Stomach (tissue), 19 donors: ENCODE measurements at regions of chr17 and their contacts with region 1.

Region 1: DNA sequence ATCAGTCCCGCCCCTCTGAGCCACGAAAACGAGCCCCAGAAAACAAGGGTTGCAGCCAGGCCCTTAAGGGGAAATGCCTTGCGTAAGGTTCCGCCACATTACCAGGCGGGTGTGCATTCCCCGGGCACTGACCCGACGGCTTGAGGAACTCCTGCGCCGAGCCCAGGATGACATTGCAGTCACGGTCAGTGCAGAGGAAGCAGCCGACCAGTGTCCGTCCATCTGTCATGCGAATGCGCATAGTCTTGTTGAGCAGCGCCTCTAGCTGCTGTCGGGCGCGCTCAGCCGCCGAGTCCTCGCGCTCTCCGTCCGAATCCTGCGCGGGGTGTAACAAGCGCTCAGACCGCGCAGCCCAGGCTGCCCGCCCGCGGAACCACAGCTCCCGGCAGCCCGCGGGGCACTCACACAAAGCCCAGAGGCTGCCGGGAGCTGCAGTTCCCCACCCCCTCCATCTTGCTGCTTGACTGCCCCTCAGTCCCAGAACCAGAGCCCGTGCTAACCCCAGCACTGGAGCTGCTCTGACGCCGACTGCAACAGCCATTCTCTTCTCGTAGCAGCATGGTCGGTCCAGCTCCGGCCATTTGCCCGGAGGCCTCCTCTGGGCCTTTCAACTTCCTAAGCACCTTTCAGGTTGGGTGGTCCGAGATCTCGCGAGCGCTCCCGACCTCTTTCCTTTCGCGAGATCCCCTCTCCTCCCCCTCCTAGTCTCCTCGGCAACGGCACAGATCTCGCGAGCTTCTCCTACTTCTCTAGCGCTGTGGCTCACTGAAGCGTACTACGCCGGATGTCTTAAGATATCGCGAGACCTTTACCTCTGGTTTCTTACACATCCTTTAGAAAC is at the start of gene NAA38:
- DNase-seq: peak; percentile 96 to 99
- H3K4me3 ChIP-seq: peak within 1 kb of the TSS; percentile 64 to 77 (median 68)
- H3K27ac ChIP-seq: peak within 1 kb of the TSS; percentile 93 to 96 (median 94)
- H3K4me1 ChIP-seq: peaks cover 33 to 51% (median 42%) of the 10 kb centered on the region in 4 donors
- H3K27me3 ChIP-seq: no peaks in the 10 kb centered on the region
- CTCF ChIP-seq: peak in 4 of 7 experiments; percentile 9 to 71 (median 40)
- EP300 ChIP-seq: no peak
- POLR2A ChIP-seq: no peak
- total RNA-seq, gene NAA38: 42.0 to 281 (median 94.5) TPM

Region 2: GRCh38 chr17:7745748-7746470 is 111.2 kb before region 1 on chr17:
- intact Hi-C with region 1: loop called (anchors 10 kb)
- DNase-seq: peak in 1 of 2 donors; percentile 44
- H3K4me3 ChIP-seq: no peak overlapping the region
- H3K27ac ChIP-seq: no peak overlapping the region
- H3K4me1 ChIP-seq: peaks cover 3 to 24% (median 12%) of the 10 kb centered on the region in 4 donors
- H3K27me3 ChIP-seq: peaks cover 0 to 30% (median 0%) of the 10 kb centered on the region in 3 donors
- CTCF ChIP-seq: no peak
- EP300 ChIP-seq: no peak
- POLR2A ChIP-seq: no peak